ENCODE measurements at regions of chr1 and their contacts with region 1.

Region 1: GRCh38 chr1:10507111-10507879 is 32.5 kb downstream of the PEX14 start:
- DNase-seq: peak; percentile 62
- H3K4me3 ChIP-seq: no peak overlapping the region
- H3K27ac ChIP-seq: no peak overlapping the region
- H3K4me1 ChIP-seq: peaks cover 15 to 60% (median 23%) of the 10 kb centered on the region in 4 donors
- H3K27me3 ChIP-seq: no peaks in the 10 kb centered on the region
- CTCF ChIP-seq: peak; percentile 71 to 81 (median 75)
- EP300 ChIP-seq: no peak
- POLR2A ChIP-seq: no peak

Region 2: DNA sequence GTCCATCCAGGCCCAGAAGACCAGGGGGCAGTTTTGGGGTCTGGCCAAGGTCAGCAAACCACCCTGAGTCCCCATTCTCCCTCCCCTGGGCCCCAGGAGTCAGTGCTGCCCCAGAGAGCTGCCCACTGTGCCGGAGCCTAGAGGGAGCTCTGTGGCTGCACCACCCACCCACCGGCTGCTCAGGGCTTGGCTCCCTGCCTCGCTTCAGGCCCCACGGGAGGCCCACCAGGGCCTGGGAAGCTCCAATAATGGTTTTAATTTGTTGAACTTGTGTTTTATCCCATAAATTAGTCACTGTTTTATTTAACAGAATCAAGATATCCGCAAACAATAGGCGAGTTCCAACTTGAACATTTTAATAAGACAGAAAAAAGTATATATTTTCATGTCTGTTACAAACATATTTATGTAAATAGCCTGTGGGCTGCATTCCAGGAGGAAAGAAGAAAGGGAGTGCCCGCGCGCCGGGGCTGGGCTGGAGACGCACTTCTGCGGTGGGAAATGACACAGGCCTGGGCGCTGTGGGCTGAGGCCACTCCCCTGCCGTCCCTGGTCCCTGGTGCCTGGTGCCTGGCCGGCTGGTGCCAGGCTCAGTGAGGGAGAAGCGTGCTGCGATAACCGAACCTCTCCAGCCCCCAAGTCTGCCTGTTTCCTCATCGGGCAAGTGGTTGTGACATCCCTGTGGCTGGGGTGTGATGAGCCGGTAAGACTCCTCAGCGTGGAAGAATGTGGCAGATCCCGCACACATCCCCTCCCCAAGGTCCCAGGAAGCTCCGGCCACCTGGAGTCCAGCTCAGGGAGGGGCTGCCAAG is 128.0 kb after region 1 on chr1:
- in situ Hi-C with region 1: no loop called
- intact Hi-C with region 1: no loop called
- DNase-seq: no peak
- H3K4me3 ChIP-seq: no peak overlapping the region
- H3K27ac ChIP-seq: peak overlapping the region; percentile 68 to 82 (median 74)
- H3K4me1 ChIP-seq: peaks cover 12 to 39% (median 16%) of the 10 kb centered on the region in 4 donors
- H3K27me3 ChIP-seq: no peaks in the 10 kb centered on the region
- CTCF ChIP-seq: no peak
- EP300 ChIP-seq: no peak
- POLR2A ChIP-seq: no peak

Region 3: DNA sequence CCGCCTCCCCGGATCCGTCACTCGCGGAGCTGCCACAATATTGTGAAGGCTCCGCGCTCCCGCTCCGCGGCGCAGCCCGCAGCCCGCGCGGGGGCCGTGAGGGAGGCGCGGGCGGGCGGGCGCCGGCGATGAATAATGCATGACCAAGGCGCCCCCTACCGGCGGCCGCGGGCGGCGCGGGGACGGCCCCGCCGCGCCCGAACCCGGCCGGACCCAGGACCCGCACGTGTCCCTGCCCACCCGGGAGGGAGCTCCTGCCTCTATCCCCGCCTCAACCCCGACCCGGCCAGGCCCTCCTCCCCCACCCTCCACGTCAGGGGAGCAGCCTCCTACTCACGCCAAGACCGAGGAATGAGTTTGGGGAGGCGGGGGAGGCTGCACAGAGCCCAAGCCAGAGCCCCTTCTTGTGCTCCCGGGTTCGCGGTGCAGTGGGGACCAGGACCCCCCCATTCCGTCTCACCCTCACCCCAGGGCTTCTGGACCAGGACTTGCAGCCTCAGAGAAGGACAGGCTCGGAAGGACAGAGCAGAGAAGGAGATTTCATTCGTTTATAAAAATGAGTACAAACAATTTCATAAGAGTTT is 359.9 kb after region 1 on chr1:
- in situ Hi-C with region 1: loop called (anchors 5 to 25 kb)
- intact Hi-C with region 1: loop called (anchors 2 kb)
- DNase-seq: peak; percentile 69
- H3K4me3 ChIP-seq: peak overlapping the region; percentile 24 to 49 (median 38)
- H3K27ac ChIP-seq: peak overlapping the region in 2 of 4 donors; percentile 34 to 46
- H3K4me1 ChIP-seq: peaks cover 8 to 17% (median 13%) of the 10 kb centered on the region in 4 donors
- H3K27me3 ChIP-seq: peaks cover 41% of the 10 kb centered on the region
- CTCF ChIP-seq: peak in 4 of 5 experiments; percentile 42 to 83 (median 74)
- EP300 ChIP-seq: no peak
- POLR2A ChIP-seq: no peak

Region 4: GRCh38 chr1:10873189-10873588 is 365.9 kb after region 1 on chr1:
- in situ Hi-C with region 1: loop called (anchors 5 to 25 kb)
- intact Hi-C with region 1: no loop called
- DNase-seq: no peak
- H3K4me3 ChIP-seq: no peak overlapping the region
- H3K27ac ChIP-seq: no peak overlapping the region
- H3K4me1 ChIP-seq: no peaks in the 10 kb centered on the region
- H3K27me3 ChIP-seq: peaks cover 6% of the 10 kb centered on the region
- CTCF ChIP-seq: no peak
- EP300 ChIP-seq: no peak
- POLR2A ChIP-seq: no peak

Region 5: GRCh38 chr1:10939654-10940450 is 432.6 kb after region 1 on chr1:
- in situ Hi-C with region 1: loop called in 1 of 4 experiments (anchors 10 kb)
- intact Hi-C with region 1: no loop called
- DNase-seq: peak; percentile 31
- H3K4me3 ChIP-seq: no peak overlapping the region
- H3K27ac ChIP-seq: no peak overlapping the region
- H3K4me1 ChIP-seq: peaks cover 8 to 48% (median 32%) of the 10 kb centered on the region in 4 donors
- H3K27me3 ChIP-seq: no peaks in the 10 kb centered on the region
- CTCF ChIP-seq: no peak
- EP300 ChIP-seq: no peak
- POLR2A ChIP-seq: no peak